Tibial artery (tissue), 4 donors: ENCODE measurements at regions of chr14 and their contacts with region 1.

Region 1: GRCh38 chr14:63388763-63389431 is 70.2 kb upstream of the GPHB5 start:
- DNase-seq: peak; percentile 60 to 78
- H3K4me3 ChIP-seq: no peak overlapping the region
- H3K27ac ChIP-seq: no peak overlapping the region
- H3K4me1 ChIP-seq: no peaks in the 10 kb centered on the region
- H3K27me3 ChIP-seq: no peaks in the 10 kb centered on the region
- CTCF ChIP-seq: peak; percentile 85

Region 2: GRCh38 chr14:63632932-63633514 is 244.1 kb after region 1 on chr14:
- intact Hi-C with region 1: loop called (anchors 10 kb)
- DNase-seq: no peak
- H3K4me3 ChIP-seq: no peak overlapping the region
- H3K27ac ChIP-seq: no peak overlapping the region
- H3K4me1 ChIP-seq: no peaks in the 10 kb centered on the region
- H3K27me3 ChIP-seq: no peaks in the 10 kb centered on the region
- CTCF ChIP-seq: peak in 1 of 2 experiments; percentile 18

Region 3: DNA sequence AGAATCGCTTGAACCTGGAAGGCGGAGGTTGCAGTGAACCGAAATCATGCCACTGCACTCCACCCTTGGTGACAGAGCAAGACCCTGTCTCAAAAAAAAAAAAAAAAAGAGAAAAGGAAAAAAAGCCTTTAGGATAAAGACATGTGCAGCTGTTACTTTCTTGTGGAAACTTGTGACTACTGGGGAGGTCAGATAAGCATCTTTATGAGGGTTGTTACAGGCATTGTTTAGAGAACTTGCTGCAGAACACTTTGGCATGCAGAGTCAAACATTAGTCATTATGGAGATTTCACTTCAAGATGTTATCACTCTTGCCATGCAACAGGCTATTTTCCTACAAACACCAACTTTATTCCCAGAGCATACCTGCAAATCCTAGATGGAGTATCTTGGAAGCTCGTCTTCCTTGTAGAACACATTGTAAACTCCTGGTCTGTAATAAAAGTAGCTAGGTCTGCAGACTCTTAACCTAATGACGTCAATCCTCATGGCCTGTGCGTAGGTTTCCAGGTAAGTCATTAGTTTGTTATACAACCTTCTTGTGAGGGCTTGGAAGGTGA is 289.0 kb after region 1 on chr14:
- intact Hi-C with region 1: no loop called
- DNase-seq: no peak
- H3K4me3 ChIP-seq: no peak overlapping the region
- H3K27ac ChIP-seq: no peak overlapping the region
- H3K4me1 ChIP-seq: no peaks in the 10 kb centered on the region
- H3K27me3 ChIP-seq: no peaks in the 10 kb centered on the region
- CTCF ChIP-seq: no peak

Region 4: GRCh38 chr14:63760014-63760413 is 371.1 kb after region 1 on chr14:
- intact Hi-C with region 1: loop called (anchors 10 kb)
- DNase-seq: no peak
- H3K4me3 ChIP-seq: no peak overlapping the region
- H3K27ac ChIP-seq: no peak overlapping the region
- H3K4me1 ChIP-seq: no peaks in the 10 kb centered on the region
- H3K27me3 ChIP-seq: peaks cover 0 to 2% of the 10 kb centered on the region in 2 donors
- CTCF ChIP-seq: no peak